HCT116 (cell line): ENCODE measurements at regions of chr2 and their contacts with region 1.

Region 1: DNA sequence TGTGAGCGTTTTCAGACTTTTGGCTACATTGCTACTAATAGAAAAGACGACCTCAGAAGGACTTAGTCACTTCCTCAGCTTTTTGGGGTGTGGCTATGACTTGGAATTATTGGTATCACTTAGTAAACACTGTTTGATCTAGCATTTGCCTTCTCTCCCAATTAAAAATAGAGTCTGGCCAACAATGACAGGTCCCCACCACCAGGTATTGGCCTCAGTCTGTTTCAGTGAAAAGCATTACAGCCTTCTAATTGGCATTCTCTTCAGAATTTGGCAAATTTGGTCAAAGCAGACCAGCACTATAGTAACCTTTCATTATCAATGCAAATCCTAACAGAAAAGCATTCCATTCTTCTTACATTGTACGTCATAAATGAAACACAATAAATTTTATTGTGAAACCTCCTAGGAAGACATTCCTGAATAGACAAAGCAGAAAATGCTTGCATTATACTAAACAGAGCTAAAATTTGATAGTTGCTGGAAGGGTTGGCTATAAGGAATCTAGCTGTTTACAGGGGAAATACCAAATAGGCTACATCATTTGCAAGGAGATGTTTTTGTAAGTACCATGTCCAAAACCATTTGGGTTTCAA is 613.9 kb downstream of the IRS1 start:
- DNase-seq: peak; percentile 84
- ATAC-seq: peak; percentile 68
- H3K4me3 ChIP-seq: peak overlapping the region; percentile 22 to 45; a peak in 3 of 4 replicates
- H3K27ac ChIP-seq: peak overlapping the region; percentile 95
- H3K4me1 ChIP-seq: peaks cover 82 to 100% of the 10 kb centered on the region in 2 experiments
- H3K27me3 ChIP-seq: no peaks in the 10 kb centered on the region
- CTCF ChIP-seq: peak in 1 of 3 experiments; percentile 14; a peak in 2 of 6 replicates
- POLR2A ChIP-seq: no peak
- RAD21 ChIP-seq: peak; percentile 40

Region 2: GRCh38 chr2:226172309-226172708 is 13.4 kb before region 1 on chr2:
- CTCF ChIA-PET with region 1: no interaction called
- POLR2A ChIA-PET with region 1: interaction called, 14 read pairs
- RAD21 ChIA-PET with region 1: no interaction called
- intact Hi-C with region 1: no loop called
- DNase-seq: no peak
- ATAC-seq: peak; percentile 67
- H3K4me3 ChIP-seq: 0 out of 4 replicates have a peak overlapping the region, but pooled peaks of 1 of the 2 experiments have one; percentile 16
- H3K27ac ChIP-seq: peak overlapping the region; percentile 95
- H3K4me1 ChIP-seq: peaks cover 46 to 78% of the 10 kb centered on the region in 2 experiments
- H3K27me3 ChIP-seq: no peaks in the 10 kb centered on the region
- CTCF ChIP-seq: no peak
- POLR2A ChIP-seq: no peak
- RAD21 ChIP-seq: no peak

Region 3: DNA sequence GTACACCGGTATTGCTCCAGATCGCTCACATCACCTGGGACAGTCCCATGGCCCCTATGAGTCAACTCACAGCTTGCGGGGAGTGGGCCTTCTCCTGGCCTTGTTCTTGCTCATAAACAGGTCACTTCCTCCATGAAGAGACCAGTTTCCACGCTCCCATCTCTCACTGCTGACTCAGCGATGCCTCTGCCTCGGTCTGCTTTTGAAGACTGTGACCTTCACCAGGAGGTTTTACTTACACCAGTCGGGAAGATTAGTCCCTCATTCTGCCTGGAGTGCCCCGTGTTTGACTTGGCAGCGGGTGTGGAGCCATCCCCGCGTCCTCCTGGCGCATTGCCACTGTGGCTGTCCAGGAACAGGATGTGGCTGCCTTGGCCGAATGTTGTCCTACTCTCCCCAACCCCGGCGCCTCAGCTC is 809.9 kb after region 1 on chr2:
- CTCF ChIA-PET with region 1: no interaction called
- POLR2A ChIA-PET with region 1: no interaction called
- RAD21 ChIA-PET with region 1: no interaction called
- intact Hi-C with region 1: loop called (anchors 10 kb)
- DNase-seq: peak; percentile 99
- ATAC-seq: peak; percentile 90
- H3K4me3 ChIP-seq: peak overlapping the region in 1 of 2 experiments; percentile 24; a peak in 3 of 4 replicates
- H3K27ac ChIP-seq: peak overlapping the region; percentile 88
- H3K4me1 ChIP-seq: peaks cover 33 to 37% of the 10 kb centered on the region in 2 experiments
- H3K27me3 ChIP-seq: no peaks in the 10 kb centered on the region
- CTCF ChIP-seq: no peak
- POLR2A ChIP-seq: no peak
- RAD21 ChIP-seq: 0 out of 2 replicates have a peak, but pooled peaks have one; percentile 24